Activated CD8-positive, alpha-beta T cell treated with anti-CD3 and anti-CD28 coated beads, Interleukin-2, amount 10 ng/mL, durations not matched to agents 7 days and 5 days (primary cell): ENCODE measurements at regions of chr6 and their contacts with region 1.

Region 1: GRCh38 chr6:131532580-131533039 is 40.4 kb upstream of the ARG1 start:
- DNase-seq: no peak
- ATAC-seq: peak; percentile 46
- H3K4me3 Mint-ChIP-seq: no peak overlapping the region
- H3K27ac Mint-ChIP-seq: peak overlapping the region; percentile 49
- H3K4me1 Mint-ChIP-seq: peaks cover 59% of the 10 kb centered on the region
- H3K27me3 Mint-ChIP-seq: peaks cover 4% of the 10 kb centered on the region

Region 2: DNA sequence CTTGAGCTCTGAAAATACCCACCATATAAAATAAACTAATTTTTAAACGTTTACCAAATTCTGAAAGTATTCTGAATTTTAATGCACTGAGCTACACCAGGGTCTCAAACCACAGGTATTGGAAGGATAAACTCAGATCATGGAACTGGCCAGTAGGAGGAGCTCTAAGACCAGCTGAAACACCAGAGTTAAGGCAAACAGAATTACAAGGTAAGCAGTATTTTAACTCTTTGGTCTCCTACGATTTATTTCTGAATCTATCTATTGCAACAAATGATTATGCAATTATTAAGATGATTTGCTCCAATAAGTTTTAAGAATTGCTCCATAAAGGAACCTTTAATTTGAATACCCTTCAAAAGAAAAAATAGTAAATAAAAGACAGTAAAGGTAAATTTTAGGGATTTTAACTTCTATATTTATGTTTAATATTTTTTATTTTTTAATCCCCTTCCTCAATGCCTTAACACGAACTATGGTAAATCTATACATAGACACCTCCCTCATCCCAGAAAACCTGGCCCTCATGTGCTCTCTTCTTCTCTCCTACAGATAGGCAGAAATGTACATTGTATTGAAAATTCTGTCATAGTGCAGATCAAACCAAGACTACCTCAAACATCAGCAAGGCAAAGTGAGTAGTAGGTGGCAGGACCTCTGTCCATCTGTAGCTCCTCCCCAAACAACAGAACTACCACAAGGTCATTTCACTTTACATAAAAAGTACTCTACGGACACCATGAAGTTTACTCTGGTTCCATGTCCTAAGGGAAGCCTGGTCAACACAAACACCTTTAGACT is 647.0 kb before region 1 on chr6:
- CTCF ChIA-PET with region 1: interaction called, 51 read pairs
- POLR2A ChIA-PET with region 1: no interaction called
- DNase-seq: peak; percentile 85
- ATAC-seq: peak; percentile 87
- H3K4me3 Mint-ChIP-seq: no peak overlapping the region
- H3K27ac Mint-ChIP-seq: no peak overlapping the region
- H3K4me1 Mint-ChIP-seq: no peaks in the 10 kb centered on the region
- H3K27me3 Mint-ChIP-seq: no peaks in the 10 kb centered on the region

Region 3: DNA sequence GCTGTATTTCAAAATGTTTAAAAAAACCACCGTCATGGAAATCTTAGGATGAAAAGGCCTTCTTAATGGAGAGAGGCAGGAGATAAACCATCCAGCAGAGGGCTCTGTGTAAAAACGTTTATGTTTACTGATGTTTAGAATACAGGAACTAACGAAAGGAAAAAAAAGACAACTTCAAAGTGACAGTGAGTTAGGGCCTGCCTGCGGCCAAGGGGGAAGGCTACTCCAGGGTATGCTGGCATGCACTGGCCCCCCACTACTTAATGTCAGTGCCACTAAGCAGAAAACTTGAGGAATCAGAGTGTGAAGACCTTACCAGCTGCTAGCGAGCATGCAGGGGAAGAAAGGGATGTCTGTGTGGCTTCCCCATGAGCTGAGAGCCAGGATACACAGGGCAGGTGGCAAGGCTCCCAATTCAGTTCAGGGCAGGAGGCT is 349.6 kb before region 1 on chr6:
- CTCF ChIA-PET with region 1: interaction called, 92 read pairs
- POLR2A ChIA-PET with region 1: no interaction called
- DNase-seq: peak; percentile 55
- ATAC-seq: peak; percentile 88
- H3K4me3 Mint-ChIP-seq: no peak overlapping the region
- H3K27ac Mint-ChIP-seq: peak overlapping the region; percentile 96
- H3K4me1 Mint-ChIP-seq: peaks cover 11% of the 10 kb centered on the region
- H3K27me3 Mint-ChIP-seq: no peaks in the 10 kb centered on the region

Region 4: DNA sequence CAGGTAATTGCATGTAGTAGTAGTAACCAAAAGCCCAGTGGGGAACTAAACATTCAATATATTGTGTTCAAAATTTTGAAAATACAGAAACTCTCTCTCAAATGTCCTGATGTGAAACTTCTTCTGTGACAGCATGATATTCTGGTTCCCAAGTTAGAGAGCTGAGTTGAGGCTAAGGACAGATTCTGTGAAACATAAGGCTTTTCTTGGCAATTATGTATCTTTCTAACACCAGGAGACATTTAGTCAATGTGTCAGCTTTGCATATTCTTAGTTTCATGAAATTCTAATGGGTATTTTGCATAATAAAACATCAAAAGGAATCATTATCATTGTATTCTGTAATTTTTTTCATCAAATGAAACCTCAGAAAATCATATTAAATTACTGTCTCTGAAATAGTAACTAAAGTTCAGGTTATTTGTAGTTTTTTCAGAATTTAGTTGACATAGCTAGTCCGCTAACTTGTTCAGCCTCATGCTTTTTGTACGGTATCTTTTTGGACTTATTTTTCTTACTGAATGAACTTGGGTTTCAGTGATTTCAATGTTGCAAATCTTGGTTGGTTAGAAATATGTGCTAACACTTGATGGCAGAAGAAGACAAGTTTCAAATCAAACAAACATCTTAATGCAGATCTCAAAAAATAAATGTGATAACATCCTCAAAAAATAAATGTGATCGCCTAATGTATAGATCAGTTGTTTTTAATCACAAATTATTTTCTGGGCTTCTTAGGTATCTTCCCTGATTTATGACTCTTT is 326.9 kb before region 1 on chr6:
- CTCF ChIA-PET with region 1: interaction called, 118 read pairs
- POLR2A ChIA-PET with region 1: interaction called, 13 read pairs
- DNase-seq: no peak
- ATAC-seq: no peak
- H3K4me3 Mint-ChIP-seq: no peak overlapping the region
- H3K27ac Mint-ChIP-seq: no peak overlapping the region
- H3K4me1 Mint-ChIP-seq: peaks cover 47% of the 10 kb centered on the region
- H3K27me3 Mint-ChIP-seq: no peaks in the 10 kb centered on the region

Region 5: GRCh38 chr6:131317516-131317915 is 215.1 kb before region 1 on chr6:
- CTCF ChIA-PET with region 1: no interaction called
- POLR2A ChIA-PET with region 1: no interaction called
- DNase-seq: no peak
- ATAC-seq: no peak
- H3K4me3 Mint-ChIP-seq: no peak overlapping the region
- H3K27ac Mint-ChIP-seq: no peak overlapping the region
- H3K4me1 Mint-ChIP-seq: peaks cover 8% of the 10 kb centered on the region
- H3K27me3 Mint-ChIP-seq: no peaks in the 10 kb centered on the region

Region 6: GRCh38 chr6:131336538-131337080 is 196.0 kb before region 1 on chr6:
- CTCF ChIA-PET with region 1: no interaction called
- POLR2A ChIA-PET with region 1: no interaction called
- DNase-seq: no peak
- ATAC-seq: no peak
- H3K4me3 Mint-ChIP-seq: no peak overlapping the region
- H3K27ac Mint-ChIP-seq: no peak overlapping the region
- H3K4me1 Mint-ChIP-seq: no peaks in the 10 kb centered on the region
- H3K27me3 Mint-ChIP-seq: no peaks in the 10 kb centered on the region

Region 7: GRCh38 chr6:131519670-131520436 is 12.8 kb before region 1 on chr6:
- CTCF ChIA-PET with region 1: interaction called, 100 read pairs
- POLR2A ChIA-PET with region 1: no interaction called
- DNase-seq: peak; percentile 68
- ATAC-seq: peak; percentile 95
- H3K4me3 Mint-ChIP-seq: no peak overlapping the region
- H3K27ac Mint-ChIP-seq: no peak overlapping the region
- H3K4me1 Mint-ChIP-seq: peaks cover 18% of the 10 kb centered on the region
- H3K27me3 Mint-ChIP-seq: peaks cover 2% of the 10 kb centered on the region

Region 8: DNA sequence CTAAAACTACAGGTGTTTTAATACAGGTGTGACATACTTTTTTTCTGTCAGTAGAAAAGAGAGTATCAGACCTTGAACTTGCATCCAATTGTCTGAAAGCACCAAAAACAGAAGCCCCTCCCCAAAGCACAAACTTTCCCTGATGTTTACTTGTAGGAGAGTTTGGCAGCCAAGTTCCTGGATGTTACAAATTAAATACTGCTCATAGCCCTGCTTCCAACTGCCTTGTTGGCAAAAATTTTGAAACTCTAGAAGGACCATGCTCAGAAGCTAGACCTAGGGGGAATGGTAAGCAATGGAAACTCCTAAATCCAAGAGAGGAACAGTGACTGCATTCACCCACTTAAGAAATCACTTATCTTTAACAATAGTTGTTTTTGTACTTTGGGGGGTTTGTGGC is 23.4 kb after region 1 on chr6:
- CTCF ChIA-PET with region 1: no interaction called
- POLR2A ChIA-PET with region 1: no interaction called
- DNase-seq: no peak
- ATAC-seq: no peak
- H3K4me3 Mint-ChIP-seq: no peak overlapping the region
- H3K27ac Mint-ChIP-seq: no peak overlapping the region
- H3K4me1 Mint-ChIP-seq: no peaks in the 10 kb centered on the region
- H3K27me3 Mint-ChIP-seq: no peaks in the 10 kb centered on the region